ENCODE measurements at regions of chr1 and their contacts with region 1.

Region 1: GRCh38 chr1:38026592-38027200 is 14.2 kb downstream of the UTP11 start:
- DNase-seq: peak; percentile 57
- ATAC-seq: peak; percentile 42
- H3K4me3 ChIP-seq: no peak overlapping the region
- H3K27ac ChIP-seq: no peak overlapping the region
- H3K4me1 ChIP-seq: peaks cover 18% of the 10 kb centered on the region; the same call in 1 of the 2 replicates
- H3K27me3 ChIP-seq: no peaks in the 10 kb centered on the region
- CTCF ChIP-seq: peak; percentile 75
- POLR2A ChIP-seq: no peak
- RAD21 ChIP-seq: peak; percentile 85

Region 2: GRCh38 chr1:37764414-37764825 is 262.3 kb before region 1 on chr1:
- CTCF ChIA-PET with region 1: no interaction called
- POLR2A ChIA-PET with region 1: no interaction called
- dilution Hi-C with region 1: no loop called
- in situ Hi-C with region 1: no loop called
- intact Hi-C with region 1: no loop called
- DNase-seq: peak; percentile 37
- ATAC-seq: peak; percentile 90
- H3K4me3 ChIP-seq: no peak overlapping the region
- H3K27ac ChIP-seq: no peak overlapping the region
- H3K4me1 ChIP-seq: no peaks in the 10 kb centered on the region
- H3K27me3 ChIP-seq: peaks cover 44% of the 10 kb centered on the region
- CTCF ChIP-seq: no peak
- POLR2A ChIP-seq: no peak
- RAD21 ChIP-seq: no peak

Region 3: DNA sequence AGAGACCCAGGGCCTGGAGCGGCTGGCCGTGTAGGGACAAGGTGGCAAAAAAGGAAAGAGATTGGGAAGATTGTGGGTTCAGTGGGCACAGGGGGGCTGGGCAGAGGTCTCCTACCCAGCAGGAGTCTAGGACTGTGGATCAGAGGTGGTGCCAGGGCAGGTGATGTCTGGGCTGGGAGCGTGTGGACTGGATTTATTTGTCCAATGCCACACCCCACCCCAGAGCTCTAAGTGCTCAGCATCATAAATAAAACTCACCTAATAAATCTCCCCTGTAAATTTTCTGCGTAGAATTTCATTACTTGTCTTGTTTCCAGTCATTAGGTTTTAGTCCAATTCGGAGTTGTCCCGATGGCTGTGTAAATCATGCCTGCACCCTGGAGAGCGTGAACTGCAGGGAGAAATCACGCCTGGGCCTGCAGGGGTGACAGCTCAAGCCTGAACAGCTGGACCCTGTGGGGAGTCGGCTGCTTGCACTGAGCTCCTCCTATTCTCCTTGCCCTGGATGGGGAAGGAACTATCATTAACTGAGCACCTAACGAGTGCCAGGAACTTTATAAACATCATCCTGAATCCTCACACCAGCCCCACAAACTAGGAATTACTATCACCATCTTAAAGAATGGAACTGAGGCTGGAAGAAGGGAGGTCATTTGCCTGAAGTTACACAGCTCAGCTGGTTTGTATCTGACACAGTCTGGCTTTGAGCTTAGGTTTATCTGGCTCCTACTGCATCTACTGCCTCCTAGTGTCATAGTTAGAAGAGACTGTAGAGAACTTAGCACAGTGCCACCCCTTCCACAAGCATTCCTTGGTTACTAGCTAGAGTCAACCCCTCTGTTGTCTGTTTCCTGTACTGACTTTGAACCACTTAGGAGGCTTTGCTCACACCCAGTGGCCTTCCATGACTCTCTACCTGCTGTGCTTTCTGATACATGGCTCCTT is 44.9 kb after region 1 on chr1:
- CTCF ChIA-PET with region 1: interaction called, 4 read pairs
- POLR2A ChIA-PET with region 1: no interaction called
- dilution Hi-C with region 1: no loop called
- in situ Hi-C with region 1: no loop called
- intact Hi-C with region 1: loop called (anchors 1 kb)
- DNase-seq: peak; percentile 55
- ATAC-seq: peak; percentile 93
- H3K4me3 ChIP-seq: no peak overlapping the region
- H3K27ac ChIP-seq: no peak overlapping the region
- H3K4me1 ChIP-seq: no peaks in the 10 kb centered on the region
- H3K27me3 ChIP-seq: peaks cover 39% of the 10 kb centered on the region
- CTCF ChIP-seq: peak; percentile 52
- POLR2A ChIP-seq: no peak
- RAD21 ChIP-seq: peak; percentile 41

Region 4: GRCh38 chr1:38474738-38475623 is 448.3 kb after region 1 on chr1:
- CTCF ChIA-PET with region 1: no interaction called
- POLR2A ChIA-PET with region 1: no interaction called
- dilution Hi-C with region 1: no loop called
- in situ Hi-C with region 1: no loop called
- intact Hi-C with region 1: loop called (anchors 10 kb)
- DNase-seq: no peak
- ATAC-seq: no peak
- H3K4me3 ChIP-seq: no peak overlapping the region
- H3K27ac ChIP-seq: no peak overlapping the region
- H3K4me1 ChIP-seq: no peaks in the 10 kb centered on the region
- H3K27me3 ChIP-seq: peaks cover 17% of the 10 kb centered on the region
- CTCF ChIP-seq: no peak
- POLR2A ChIP-seq: no peak
- RAD21 ChIP-seq: no peak

Region 5: GRCh38 chr1:38500352-38500751 is 473.7 kb after region 1 on chr1:
- CTCF ChIA-PET with region 1: no interaction called
- POLR2A ChIA-PET with region 1: no interaction called
- dilution Hi-C with region 1: no loop called
- in situ Hi-C with region 1: no loop called
- intact Hi-C with region 1: loop called (anchors 5 kb)
- DNase-seq: no peak
- ATAC-seq: no peak
- H3K4me3 ChIP-seq: no peak overlapping the region
- H3K27ac ChIP-seq: no peak overlapping the region
- H3K4me1 ChIP-seq: no peaks in the 10 kb centered on the region
- H3K27me3 ChIP-seq: no peaks in the 10 kb centered on the region
- CTCF ChIP-seq: 0 out of 2 replicates have a peak, but pooled peaks have one; percentile 8
- POLR2A ChIP-seq: no peak
- RAD21 ChIP-seq: no peak

Region 6: GRCh38 chr1:38586993-38587646 is 560.4 kb after region 1 on chr1:
- CTCF ChIA-PET with region 1: no interaction called
- POLR2A ChIA-PET with region 1: no interaction called
- dilution Hi-C with region 1: no loop called
- in situ Hi-C with region 1: no loop called
- intact Hi-C with region 1: loop called (anchors 2 kb)
- DNase-seq: no peak
- ATAC-seq: peak; percentile 87
- H3K4me3 ChIP-seq: no peak overlapping the region
- H3K27ac ChIP-seq: no peak overlapping the region
- H3K4me1 ChIP-seq: no peaks in the 10 kb centered on the region
- H3K27me3 ChIP-seq: no peaks in the 10 kb centered on the region
- CTCF ChIP-seq: peak; percentile 62
- POLR2A ChIP-seq: no peak
- RAD21 ChIP-seq: peak; percentile 61

Region 7: GRCh38 chr1:38834937-38835827 is 808.5 kb after region 1 on chr1:
- CTCF ChIA-PET with region 1: interaction called, 7 read pairs
- POLR2A ChIA-PET with region 1: no interaction called
- dilution Hi-C with region 1: no loop called
- in situ Hi-C with region 1: loop called (anchors 5 kb)
- intact Hi-C with region 1: loop called (anchors 2 kb)
- DNase-seq: peak; percentile 87
- ATAC-seq: peak; percentile 91
- H3K4me3 ChIP-seq: no peak overlapping the region
- H3K27ac ChIP-seq: no peak overlapping the region
- H3K4me1 ChIP-seq: no peaks in the 10 kb centered on the region
- H3K27me3 ChIP-seq: peaks cover 17% of the 10 kb centered on the region
- CTCF ChIP-seq: peak; percentile 81
- POLR2A ChIP-seq: no peak
- RAD21 ChIP-seq: peak; percentile 85